KBM-7 (cell line): ENCODE measurements at regions of chr1 and their contacts with region 1.

Region 1: GRCh38 chr1:92858564-92859399 is 26.9 kb downstream of the RPL5 start:
- DNase-seq: peak; percentile 91

Region 2: DNA sequence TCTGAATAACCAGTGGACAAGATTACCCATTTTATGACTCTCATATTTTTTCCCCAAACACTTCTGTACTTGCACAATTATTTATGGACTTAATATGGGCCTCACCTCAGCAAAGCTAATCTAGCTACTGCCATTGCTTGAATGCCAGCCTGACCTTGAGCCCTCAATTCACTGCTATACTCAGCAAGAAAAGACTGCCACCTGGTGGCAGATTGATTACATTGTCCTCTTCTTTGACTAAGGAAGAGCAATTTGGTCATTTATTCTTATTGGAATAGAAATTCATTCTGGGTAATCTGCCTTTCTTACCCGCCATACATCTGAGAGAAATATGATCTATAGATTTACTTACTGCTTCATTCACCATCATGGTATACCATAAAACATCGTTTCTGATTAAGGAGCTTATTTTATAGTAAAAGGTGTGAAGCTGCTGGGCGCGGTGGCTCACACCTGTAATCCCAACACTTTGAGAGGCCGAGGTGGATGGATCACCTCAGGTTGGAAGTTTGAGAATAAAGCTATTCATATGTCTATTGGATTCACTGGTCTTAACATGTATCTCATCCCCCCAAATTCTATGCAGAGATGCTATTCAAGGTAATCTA is 135.4 kb after region 1 on chr1:
- in situ Hi-C with region 1: loop called (anchors 25 kb)
- DNase-seq: peak; percentile 69